WTC11 (cell line): ENCODE measurements at regions of chr6 and their contacts with region 1.

Region 1: GRCh38 chr6:36302227-36302976 is 32.5 kb downstream of the PNPLA1 start:
- DNase-seq: peak; percentile 97
- ATAC-seq: peak; percentile 92
- H3K4me3 Mint-ChIP-seq: no peak overlapping the region
- H3K27ac Mint-ChIP-seq: peak overlapping the region; percentile 45; the same call in 1 of the 2 replicates
- H3K4me1 Mint-ChIP-seq: peaks cover 9% of the 10 kb centered on the region
- H3K27me3 Mint-ChIP-seq: no peaks in the 10 kb centered on the region
- CTCF ChIP-seq: peak; percentile 96

Region 2: DNA sequence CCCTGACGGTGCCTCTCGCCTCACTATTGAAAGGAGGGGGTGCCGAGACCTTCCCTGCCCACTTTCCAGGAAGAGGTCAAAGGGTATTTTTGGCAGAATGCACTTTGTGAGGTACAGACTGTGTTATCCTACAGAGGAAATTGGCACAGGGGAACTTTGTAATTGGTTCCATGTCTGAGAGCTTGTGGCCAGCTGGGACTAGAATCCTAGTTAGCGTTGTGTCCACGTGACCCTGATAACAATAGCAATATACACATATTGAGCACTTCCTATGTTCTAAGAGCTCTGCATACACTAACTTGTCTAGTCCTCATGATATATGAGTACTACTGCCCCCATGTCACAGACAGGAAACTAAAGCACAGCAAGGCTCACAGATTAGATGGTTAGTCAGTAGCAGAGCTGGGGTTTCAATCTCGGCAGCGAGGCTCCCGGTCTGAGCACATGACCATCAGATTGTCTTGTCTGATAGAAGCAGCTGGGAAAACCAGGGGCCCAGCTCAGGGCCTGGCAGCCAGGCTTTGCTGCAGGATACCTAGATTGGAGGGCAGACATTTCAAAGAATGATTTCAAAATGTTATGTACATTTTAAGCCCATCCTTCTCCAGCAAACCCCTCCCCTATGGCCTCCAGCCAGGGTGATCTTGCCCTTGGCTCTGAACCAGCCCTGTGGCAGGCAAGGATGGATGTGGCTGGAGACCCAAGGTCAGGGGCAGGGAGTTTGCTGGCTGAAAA is 170.7 kb before region 1 on chr6:
- CTCF ChIA-PET with region 1: interaction called, 12 read pairs
- POLR2A ChIA-PET with region 1: no interaction called
- DNase-seq: no peak
- ATAC-seq: no peak
- H3K4me3 Mint-ChIP-seq: peak overlapping the region; percentile 36
- H3K27ac Mint-ChIP-seq: no peak overlapping the region
- H3K4me1 Mint-ChIP-seq: peaks cover 32% of the 10 kb centered on the region
- H3K27me3 Mint-ChIP-seq: peaks cover 10% of the 10 kb centered on the region
- CTCF ChIP-seq: no peak

Region 3: DNA sequence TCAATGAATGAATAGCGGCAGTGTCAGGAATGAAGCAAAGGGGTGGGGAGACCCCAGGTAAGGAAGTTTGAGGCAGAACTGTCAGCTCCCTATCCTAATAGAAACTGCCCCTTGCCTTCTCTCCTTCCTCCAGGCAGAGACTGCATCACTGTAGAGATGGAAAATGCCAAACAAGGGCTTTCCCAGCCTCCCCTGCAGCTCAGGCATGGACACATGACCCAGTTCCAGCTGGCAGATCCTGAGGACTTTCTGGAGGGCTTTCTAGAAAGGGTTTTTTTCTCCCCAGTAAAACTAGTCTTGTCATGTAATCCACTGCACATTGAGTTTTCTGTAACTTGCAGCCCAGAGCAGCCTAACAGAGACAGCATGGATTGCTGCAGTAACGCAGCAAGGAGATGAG is 50.4 kb before region 1 on chr6:
- CTCF ChIA-PET with region 1: interaction called, 24 read pairs
- POLR2A ChIA-PET with region 1: no interaction called
- DNase-seq: no peak
- ATAC-seq: no peak
- H3K4me3 Mint-ChIP-seq: no peak overlapping the region
- H3K27ac Mint-ChIP-seq: 0 out of 2 replicates have a peak overlapping the region, but pooled peaks have one; percentile 0
- H3K4me1 Mint-ChIP-seq: peaks cover 6% of the 10 kb centered on the region
- H3K27me3 Mint-ChIP-seq: no peaks in the 10 kb centered on the region
- CTCF ChIP-seq: no peak

Region 4: DNA sequence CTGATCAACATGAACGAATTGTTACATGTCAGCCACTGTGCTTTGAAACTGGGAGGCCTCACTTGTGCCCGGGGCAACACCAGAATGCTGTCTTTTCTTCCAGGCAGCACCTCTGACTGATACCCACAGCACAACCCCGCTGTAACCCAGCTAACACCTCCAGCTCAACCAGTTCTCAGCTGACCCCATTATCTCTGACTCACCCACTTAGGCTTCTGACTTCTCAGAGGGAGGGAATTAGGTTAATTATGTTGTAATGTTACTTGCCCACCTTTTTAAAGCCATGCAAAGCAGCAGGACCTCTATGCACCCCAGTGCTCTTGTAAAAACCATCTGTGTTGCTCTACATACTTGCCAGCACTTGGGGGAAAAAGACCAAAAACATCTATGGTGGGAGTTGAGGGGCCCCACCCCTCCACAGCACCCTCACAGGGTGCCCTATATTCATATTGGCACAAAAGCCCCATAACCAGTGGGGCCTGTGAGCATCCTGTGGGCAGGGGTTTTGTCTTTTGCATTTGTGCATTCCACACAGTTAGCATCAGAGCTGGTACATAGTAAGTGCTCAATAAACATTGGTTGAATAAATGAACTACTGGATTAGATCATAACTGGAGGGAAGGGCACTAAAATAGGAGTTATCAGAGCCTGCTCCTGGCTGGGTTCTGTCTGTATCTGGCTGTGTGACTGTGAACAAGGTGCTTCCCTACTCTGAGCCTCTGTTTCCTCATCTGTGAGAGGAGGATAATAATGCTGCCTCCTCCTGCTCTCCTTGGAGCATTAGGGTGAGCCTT is 12.0 kb after region 1 on chr6:
- CTCF ChIA-PET with region 1: interaction called, 32 read pairs
- POLR2A ChIA-PET with region 1: no interaction called
- DNase-seq: no peak
- ATAC-seq: peak; percentile 58
- H3K4me3 Mint-ChIP-seq: no peak overlapping the region
- H3K27ac Mint-ChIP-seq: peak overlapping the region; percentile 71; the same call in 1 of the 2 replicates
- H3K4me1 Mint-ChIP-seq: peaks cover 5% of the 10 kb centered on the region
- H3K27me3 Mint-ChIP-seq: no peaks in the 10 kb centered on the region
- CTCF ChIP-seq: no peak

Region 5: GRCh38 chr6:36340618-36341454 is 38.4 kb after region 1 on chr6:
- CTCF ChIA-PET with region 1: interaction called, 30 read pairs
- POLR2A ChIA-PET with region 1: interaction called, 4 read pairs
- DNase-seq: peak; percentile 83
- ATAC-seq: peak; percentile 84
- H3K4me3 Mint-ChIP-seq: peak overlapping the region; percentile 70
- H3K27ac Mint-ChIP-seq: no peak overlapping the region; the same call in 1 of the 2 replicates
- H3K4me1 Mint-ChIP-seq: peaks cover 9% of the 10 kb centered on the region
- H3K27me3 Mint-ChIP-seq: peaks cover 15% of the 10 kb centered on the region
- CTCF ChIP-seq: peak; percentile 93

Region 6: DNA sequence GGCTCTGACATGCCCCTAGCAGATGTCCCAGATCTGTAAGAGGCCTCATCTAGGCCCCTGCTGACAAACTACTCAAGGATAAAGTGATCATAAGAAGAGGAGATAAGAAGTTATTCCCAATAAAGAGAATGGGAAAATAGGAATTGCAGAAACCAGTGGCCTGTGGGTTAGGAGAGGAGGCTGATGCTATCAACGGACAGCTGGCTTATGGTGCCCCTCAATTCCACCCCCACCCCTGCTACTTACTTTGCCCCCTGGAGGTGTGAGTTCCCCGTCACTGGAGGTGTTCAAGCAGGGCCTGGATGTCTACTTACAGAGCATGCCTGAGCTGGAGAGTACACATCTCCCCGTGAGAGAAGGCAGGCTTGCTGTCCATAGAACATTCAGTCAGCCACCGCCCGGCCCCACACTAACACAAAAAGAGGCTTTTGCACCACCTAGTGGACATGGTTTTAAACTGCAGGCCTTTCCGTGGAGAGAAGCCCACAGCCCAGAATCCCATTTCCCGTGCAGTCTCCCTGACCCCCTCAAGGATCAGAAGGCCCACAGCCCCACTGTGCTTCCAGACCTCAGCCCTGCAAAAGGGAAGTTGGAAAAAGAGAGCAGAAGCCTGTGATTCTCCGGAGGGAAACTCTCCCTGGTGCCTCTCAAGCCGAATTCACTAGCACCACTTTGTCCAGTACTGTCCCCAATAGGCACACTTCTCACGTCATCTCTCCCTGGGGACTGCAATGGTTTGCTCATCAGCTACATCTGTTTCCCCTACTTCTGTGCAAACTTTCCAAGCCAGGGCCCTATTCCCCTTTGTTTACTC is 58.0 kb after region 1 on chr6:
- CTCF ChIA-PET with region 1: interaction called, 52 read pairs
- POLR2A ChIA-PET with region 1: no interaction called
- DNase-seq: peak; percentile 77
- ATAC-seq: peak; percentile 96
- H3K4me3 Mint-ChIP-seq: no peak overlapping the region
- H3K27ac Mint-ChIP-seq: no peak overlapping the region
- H3K4me1 Mint-ChIP-seq: no peaks in the 10 kb centered on the region
- H3K27me3 Mint-ChIP-seq: no peaks in the 10 kb centered on the region; the same call in 1 of the 2 replicates
- CTCF ChIP-seq: peak; percentile 67